CD4-positive, alpha-beta memory T cell (primary cell): ENCODE measurements at regions of chr7 and their contacts with region 1.

Region 1: GRCh38 chr7:137898839-137899721 is 52.3 kb upstream of the DGKI start:
- DNase-seq: peak; percentile 58 to 74 (median 62)
- H3K4me3 ChIP-seq: no peak overlapping the region
- H3K4me3 Mint-ChIP-seq: peak overlapping the region in 7 of 8 donors; percentile 8 to 66 (median 43)
- H3K27ac ChIP-seq: no peak overlapping the region
- H3K27ac Mint-ChIP-seq: peak overlapping the region; percentile 36 to 81 (median 70)
- H3K4me1 ChIP-seq: peaks cover 9% of the 10 kb centered on the region
- H3K4me1 Mint-ChIP-seq: peaks cover 10 to 21% (median 17%) of the 10 kb centered on the region in 4 donors
- H3K27me3 ChIP-seq: no peaks in the 10 kb centered on the region
- H3K27me3 Mint-ChIP-seq: no peaks in the 10 kb centered on the region

Region 2: GRCh38 chr7:137734226-137734625 is 164.9 kb before region 1 on chr7:
- CTCF ChIA-PET with region 1: no interaction called
- POLR2A ChIA-PET with region 1: no interaction called
- intact Hi-C with region 1: no loop called
- DNase-seq: no peak
- H3K4me3 ChIP-seq: no peak overlapping the region
- H3K4me3 Mint-ChIP-seq: no peak overlapping the region
- H3K27ac ChIP-seq: no peak overlapping the region
- H3K27ac Mint-ChIP-seq: no peak overlapping the region
- H3K4me1 ChIP-seq: no peaks in the 10 kb centered on the region
- H3K4me1 Mint-ChIP-seq: no peaks in the 10 kb centered on the region
- H3K27me3 ChIP-seq: no peaks in the 10 kb centered on the region
- H3K27me3 Mint-ChIP-seq: peaks cover 0 to 4% of the 10 kb centered on the region in 2 donors

Region 3: GRCh38 chr7:137798073-137798763 is 100.9 kb before region 1 on chr7:
- CTCF ChIA-PET with region 1: no interaction called
- POLR2A ChIA-PET with region 1: no interaction called
- intact Hi-C with region 1: no loop called
- DNase-seq: no peak
- H3K4me3 ChIP-seq: no peak overlapping the region
- H3K4me3 Mint-ChIP-seq: no peak overlapping the region
- H3K27ac ChIP-seq: no peak overlapping the region
- H3K27ac Mint-ChIP-seq: no peak overlapping the region
- H3K4me1 ChIP-seq: no peaks in the 10 kb centered on the region
- H3K4me1 Mint-ChIP-seq: no peaks in the 10 kb centered on the region
- H3K27me3 ChIP-seq: no peaks in the 10 kb centered on the region
- H3K27me3 Mint-ChIP-seq: peaks cover 1% of the 10 kb centered on the region in 2 donors

Region 4: GRCh38 chr7:137820677-137821420 is 78.2 kb before region 1 on chr7:
- CTCF ChIA-PET with region 1: no interaction called
- POLR2A ChIA-PET with region 1: no interaction called
- intact Hi-C with region 1: no loop called
- DNase-seq: no peak
- H3K4me3 ChIP-seq: no peak overlapping the region
- H3K4me3 Mint-ChIP-seq: no peak overlapping the region
- H3K27ac ChIP-seq: no peak overlapping the region
- H3K27ac Mint-ChIP-seq: no peak overlapping the region
- H3K4me1 ChIP-seq: no peaks in the 10 kb centered on the region
- H3K4me1 Mint-ChIP-seq: no peaks in the 10 kb centered on the region
- H3K27me3 ChIP-seq: no peaks in the 10 kb centered on the region
- H3K27me3 Mint-ChIP-seq: peaks cover 11 to 19% of the 10 kb centered on the region in 2 donors

Region 5: GRCh38 chr7:137915266-137915665 is 16.2 kb after region 1 on chr7:
- CTCF ChIA-PET with region 1: interaction called, 44 read pairs
- POLR2A ChIA-PET with region 1: no interaction called
- intact Hi-C with region 1: no loop called
- DNase-seq: no peak
- H3K4me3 ChIP-seq: no peak overlapping the region
- H3K4me3 Mint-ChIP-seq: no peak overlapping the region
- H3K27ac ChIP-seq: no peak overlapping the region
- H3K27ac Mint-ChIP-seq: no peak overlapping the region
- H3K4me1 ChIP-seq: no peaks in the 10 kb centered on the region
- H3K4me1 Mint-ChIP-seq: peaks cover 0 to 25% (median 13%) of the 10 kb centered on the region in 4 donors
- H3K27me3 ChIP-seq: no peaks in the 10 kb centered on the region
- H3K27me3 Mint-ChIP-seq: no peaks in the 10 kb centered on the region

Region 6: DNA sequence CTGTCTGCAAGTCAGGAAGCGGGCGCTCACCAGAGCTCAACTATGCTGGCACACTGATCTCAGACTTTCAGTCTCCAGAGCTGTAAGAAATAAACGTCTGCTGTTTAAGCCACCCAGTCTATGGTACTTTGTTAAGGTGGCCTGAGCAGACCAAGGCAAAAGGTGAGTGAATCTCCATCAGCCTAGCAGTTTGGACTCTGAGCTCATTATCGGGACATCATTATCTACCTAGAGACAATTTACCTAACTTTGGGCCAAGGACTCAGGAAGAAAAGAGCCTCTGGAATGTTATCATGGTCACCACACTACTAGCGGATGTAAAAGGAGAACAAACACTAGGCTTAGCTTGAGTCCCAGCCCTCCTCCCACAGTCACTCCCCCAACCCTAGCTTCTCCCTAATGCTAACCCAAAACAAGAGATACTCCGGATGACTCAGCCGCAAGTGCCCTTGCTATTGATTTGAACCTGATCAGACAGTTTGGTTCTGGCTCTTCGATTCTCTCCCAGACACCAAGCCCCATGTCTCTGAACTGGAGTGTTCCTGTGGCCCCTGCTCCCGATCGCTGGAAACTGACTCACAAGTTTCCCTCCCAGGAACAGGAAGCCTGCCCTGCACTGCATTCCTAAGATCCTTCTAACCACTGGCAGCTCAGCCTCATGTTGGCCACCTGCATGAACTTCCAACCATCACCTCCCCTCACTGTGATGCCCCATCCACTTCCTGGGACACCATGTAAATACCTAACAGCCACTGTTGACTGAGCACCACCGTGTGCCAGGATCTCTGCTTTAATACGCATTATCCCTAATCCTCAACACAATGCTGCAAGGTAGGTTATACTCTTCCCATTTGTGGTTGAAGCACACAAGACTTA is 68.3 kb after region 1 on chr7:
- CTCF ChIA-PET with region 1: interaction called, 10 read pairs
- POLR2A ChIA-PET with region 1: no interaction called
- intact Hi-C with region 1: no loop called
- DNase-seq: no peak
- H3K4me3 ChIP-seq: no peak overlapping the region
- H3K4me3 Mint-ChIP-seq: peak overlapping the region in 1 of 8 donors; percentile 50
- H3K27ac ChIP-seq: no peak overlapping the region
- H3K27ac Mint-ChIP-seq: peak overlapping the region in 6 of 7 donors; percentile 10 to 91 (median 40)
- H3K4me1 ChIP-seq: peaks cover 24% of the 10 kb centered on the region
- H3K4me1 Mint-ChIP-seq: peaks cover 15 to 38% (median 27%) of the 10 kb centered on the region in 4 donors
- H3K27me3 ChIP-seq: no peaks in the 10 kb centered on the region
- H3K27me3 Mint-ChIP-seq: no peaks in the 10 kb centered on the region

Region 7: GRCh38 chr7:138008547-138009349 is 109.7 kb after region 1 on chr7:
- CTCF ChIA-PET with region 1: interaction called, 594 read pairs
- POLR2A ChIA-PET with region 1: interaction called, 12 read pairs
- intact Hi-C with region 1: loop called (anchors 1 kb)
- DNase-seq: peak in 4 of 5 donors; percentile 50 to 60 (median 55)
- H3K4me3 ChIP-seq: no peak overlapping the region
- H3K4me3 Mint-ChIP-seq: peak overlapping the region in 2 of 8 donors; percentile 39 to 68
- H3K27ac ChIP-seq: no peak overlapping the region
- H3K27ac Mint-ChIP-seq: peak overlapping the region in 1 of 7 donors; percentile 57
- H3K4me1 ChIP-seq: no peaks in the 10 kb centered on the region
- H3K4me1 Mint-ChIP-seq: peaks cover 0 to 4% (median 3%) of the 10 kb centered on the region in 4 donors
- H3K27me3 ChIP-seq: no peaks in the 10 kb centered on the region
- H3K27me3 Mint-ChIP-seq: no peaks in the 10 kb centered on the region

Region 8: DNA sequence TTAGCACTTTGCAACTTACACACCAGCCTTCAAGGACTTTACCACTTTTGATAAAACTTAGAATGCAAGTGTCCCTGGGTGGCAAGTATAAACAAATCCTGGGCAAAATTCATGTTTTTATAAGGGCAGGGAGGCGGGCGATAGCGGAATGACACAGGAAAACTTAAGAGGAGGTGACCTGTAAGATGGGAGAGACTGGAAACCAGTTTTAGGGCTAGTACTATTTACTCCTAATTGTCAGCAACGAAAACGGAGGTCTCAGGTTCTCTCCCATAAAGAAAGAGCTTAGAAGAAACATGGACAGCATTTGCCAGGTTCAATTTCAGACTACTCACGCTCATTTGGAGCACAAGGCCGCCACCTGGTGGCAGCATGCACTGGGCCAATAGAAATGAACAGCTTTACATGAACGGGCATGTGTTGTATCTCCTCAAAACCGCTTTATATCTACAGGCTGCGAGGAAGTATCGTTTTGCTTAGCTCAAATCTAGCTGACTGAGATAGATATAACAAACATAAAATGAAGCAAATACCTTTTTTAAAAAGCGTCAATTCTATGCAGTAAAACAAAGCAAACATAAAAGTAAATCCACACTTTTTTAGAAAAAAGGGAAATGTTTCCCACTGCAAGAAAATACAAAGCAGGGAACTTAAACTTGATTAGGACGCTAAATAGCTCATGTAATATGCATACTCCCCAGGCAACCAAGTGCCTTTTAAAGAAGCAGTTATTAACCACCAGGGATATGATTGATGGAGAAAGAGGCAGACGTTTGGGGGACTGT is 839.7 kb after region 1 on chr7:
- CTCF ChIA-PET with region 1: interaction called, 17 read pairs
- POLR2A ChIA-PET with region 1: no interaction called
- intact Hi-C with region 1: loop called (anchors 2 kb)
- DNase-seq: peak; percentile 74 to 81 (median 78)
- H3K4me3 ChIP-seq: no peak overlapping the region
- H3K4me3 Mint-ChIP-seq: no peak overlapping the region
- H3K27ac ChIP-seq: no peak overlapping the region
- H3K27ac Mint-ChIP-seq: peak overlapping the region in 5 of 7 donors; percentile 38 to 69 (median 45)
- H3K4me1 ChIP-seq: no peaks in the 10 kb centered on the region
- H3K4me1 Mint-ChIP-seq: peaks cover 2 to 6% (median 4%) of the 10 kb centered on the region in 4 donors
- H3K27me3 ChIP-seq: no peaks in the 10 kb centered on the region
- H3K27me3 Mint-ChIP-seq: peaks cover 0 to 1% of the 10 kb centered on the region in 2 donors